K562 (cell line): ENCODE measurements at regions of chr13 and their contacts with region 1.

Region 1: GRCh38 chr13:60431108-60431700 is 34.2 kb downstream of the TDRD3 start:
- DNase-seq: peak; percentile 16 to 55 (median 18)
- ATAC-seq: peak; percentile 86
- H3K4me3 ChIP-seq: no peak overlapping the region
- H3K27ac ChIP-seq: no peak overlapping the region
- H3K4me1 ChIP-seq: no peaks in the 10 kb centered on the region
- H3K27me3 ChIP-seq: no peaks in the 10 kb centered on the region
- CTCF ChIP-seq: peak; percentile 48 to 87 (median 49); a peak in 5 of 6 replicates
- EP300 ChIP-seq: no peak
- POLR2A ChIP-seq: no peak
- RAD21 ChIP-seq: peak; percentile 86 to 89

Region 2: DNA sequence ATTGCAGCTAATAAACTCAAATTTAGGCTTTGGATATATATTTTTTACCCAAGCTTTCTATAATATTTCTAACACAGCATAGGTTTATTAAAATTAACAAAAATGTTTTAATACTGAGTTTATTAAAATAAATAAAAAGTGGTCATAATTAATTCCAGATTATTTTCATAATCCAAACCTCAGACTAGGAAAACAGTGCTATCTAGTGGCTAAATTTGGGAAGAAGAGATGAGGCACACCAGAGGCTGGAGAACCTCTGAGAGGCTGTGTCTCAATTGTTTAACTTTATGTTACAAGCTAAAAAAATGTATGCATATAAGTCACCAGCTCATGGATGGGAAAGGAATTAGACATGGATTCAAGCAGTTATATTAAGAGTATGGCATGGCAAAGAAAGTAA is 659.9 kb before region 1 on chr13:
- CTCF ChIA-PET with region 1: no interaction called
- POLR2A ChIA-PET with region 1: no interaction called
- in situ Hi-C with region 1: no loop called
- intact Hi-C with region 1: loop called (anchors 10 kb)
- DNase-seq: peak in 2 of 4 experiments; percentile 4 to 11
- ATAC-seq: no peak
- H3K4me3 ChIP-seq: no peak overlapping the region
- H3K27ac ChIP-seq: no peak overlapping the region
- H3K4me1 ChIP-seq: no peaks in the 10 kb centered on the region
- H3K27me3 ChIP-seq: no peaks in the 10 kb centered on the region
- CTCF ChIP-seq: peak; percentile 7 to 48 (median 24); a peak in 2 of 6 replicates
- EP300 ChIP-seq: no peak
- POLR2A ChIP-seq: no peak
- RAD21 ChIP-seq: peak; percentile 32 to 40

Region 3: GRCh38 chr13:60335531-60335930 is 95.7 kb before region 1 on chr13:
- CTCF ChIA-PET with region 1: no interaction called
- POLR2A ChIA-PET with region 1: no interaction called
- in situ Hi-C with region 1: loop called (anchors 10 kb)
- intact Hi-C with region 1: loop called (anchors 5 kb)
- DNase-seq: no peak
- ATAC-seq: no peak
- H3K4me3 ChIP-seq: no peak overlapping the region
- H3K27ac ChIP-seq: no peak overlapping the region
- H3K4me1 ChIP-seq: no peaks in the 10 kb centered on the region; a peak in 1 of 5 replicates
- H3K27me3 ChIP-seq: no peaks in the 10 kb centered on the region
- CTCF ChIP-seq: peak in 2 of 3 experiments; percentile 25 to 62; a peak in 3 of 6 replicates
- EP300 ChIP-seq: no peak
- POLR2A ChIP-seq: no peak
- RAD21 ChIP-seq: peak; percentile 66 to 70

Region 4: GRCh38 chr13:60351326-60351725 is 79.9 kb before region 1 on chr13:
- CTCF ChIA-PET with region 1: no interaction called
- POLR2A ChIA-PET with region 1: no interaction called
- in situ Hi-C with region 1: loop called (anchors 10 kb)
- intact Hi-C with region 1: loop called (anchors 5 kb)
- DNase-seq: no peak
- ATAC-seq: no peak
- H3K4me3 ChIP-seq: no peak overlapping the region
- H3K27ac ChIP-seq: no peak overlapping the region
- H3K4me1 ChIP-seq: no peaks in the 10 kb centered on the region
- H3K27me3 ChIP-seq: peaks cover 0 to 4% of the 10 kb centered on the region in 2 experiments; a peak in 2 of 5 replicates
- CTCF ChIP-seq: no peak
- EP300 ChIP-seq: no peak
- POLR2A ChIP-seq: no peak
- RAD21 ChIP-seq: no peak

Region 5: GRCh38 chr13:60396783-60397703 is 34.2 kb before region 1 on chr13 and contains the start of gene TDRD3:
- CTCF ChIA-PET with region 1: no interaction called
- POLR2A ChIA-PET with region 1: no interaction called
- in situ Hi-C with region 1: no loop called
- intact Hi-C with region 1: loop called (anchors 2 kb)
- DNase-seq: peak; percentile 67 to 87 (median 72)
- ATAC-seq: peak; percentile 87
- H3K4me3 ChIP-seq: peak within 1 kb of the TSS; percentile 58
- H3K27ac ChIP-seq: peak within 1 kb of the TSS; percentile 85
- H3K4me1 ChIP-seq: peaks cover 4 to 5% of the 10 kb centered on the region in 2 experiments; a peak in 3 of 5 replicates
- H3K27me3 ChIP-seq: no peaks in the 10 kb centered on the region
- CTCF ChIP-seq: peak; percentile 71 to 82 (median 72)
- EP300 ChIP-seq: no peak
- POLR2A ChIP-seq: peak; percentile 78
- RAD21 ChIP-seq: peak; percentile 26 to 32
- polyA plus RNA-seq, gene TDRD3: 3.6 to 4.7 TPM